ENCODE measurements at regions of chr4 and their contacts with region 1.

Region 1: DNA sequence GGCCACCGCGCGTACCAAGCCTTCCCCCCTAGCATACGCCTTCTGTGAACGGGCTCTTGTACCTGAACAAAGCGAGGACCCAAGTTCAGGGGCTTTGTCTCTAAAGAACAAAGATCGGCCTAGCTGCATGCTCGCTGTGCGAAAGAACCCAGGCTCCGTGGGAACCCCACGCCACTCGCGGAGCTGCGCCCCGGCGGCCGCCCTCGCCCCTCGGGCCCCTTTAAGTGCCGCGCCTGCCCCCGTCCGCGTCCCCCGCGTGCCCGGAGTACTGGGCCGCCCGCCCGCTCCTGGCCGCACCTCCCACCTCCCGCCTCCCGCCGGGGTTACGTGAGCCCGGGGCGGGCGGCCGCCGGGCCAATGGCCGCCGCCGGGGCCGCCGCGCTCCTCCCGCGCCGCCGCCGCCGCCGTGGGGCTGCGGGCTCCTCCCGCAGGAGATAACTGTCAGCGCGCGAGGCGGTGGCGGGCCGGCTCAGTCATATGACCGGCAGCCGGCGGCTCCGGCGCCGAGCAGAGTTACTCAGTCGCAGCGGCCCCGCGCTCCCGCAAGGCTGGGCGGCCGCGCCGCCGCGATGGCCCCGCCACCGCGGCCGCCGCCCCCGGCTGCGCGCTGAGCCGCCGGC is at the start of gene FNIP2:
- DNase-seq: peak; percentile 86 to 95 (median 92)
- ATAC-seq: peak; percentile 94
- H3K4me3 ChIP-seq: peak within 1 kb of the TSS; percentile 58
- H3K27ac ChIP-seq: peak within 1 kb of the TSS; percentile 73
- H3K4me1 ChIP-seq: peaks cover 9 to 13% of the 10 kb centered on the region in 2 experiments; a peak in 4 of 5 replicates
- H3K27me3 ChIP-seq: no peaks in the 10 kb centered on the region
- CTCF ChIP-seq: no peak
- EP300 ChIP-seq: no peak
- POLR2A ChIP-seq: peak; percentile 54; the same call in 1 of the 2 replicates
- RAD21 ChIP-seq: no peak
- polyA plus RNA-seq, gene FNIP2: 1.7 to 2.8 TPM

Region 2: DNA sequence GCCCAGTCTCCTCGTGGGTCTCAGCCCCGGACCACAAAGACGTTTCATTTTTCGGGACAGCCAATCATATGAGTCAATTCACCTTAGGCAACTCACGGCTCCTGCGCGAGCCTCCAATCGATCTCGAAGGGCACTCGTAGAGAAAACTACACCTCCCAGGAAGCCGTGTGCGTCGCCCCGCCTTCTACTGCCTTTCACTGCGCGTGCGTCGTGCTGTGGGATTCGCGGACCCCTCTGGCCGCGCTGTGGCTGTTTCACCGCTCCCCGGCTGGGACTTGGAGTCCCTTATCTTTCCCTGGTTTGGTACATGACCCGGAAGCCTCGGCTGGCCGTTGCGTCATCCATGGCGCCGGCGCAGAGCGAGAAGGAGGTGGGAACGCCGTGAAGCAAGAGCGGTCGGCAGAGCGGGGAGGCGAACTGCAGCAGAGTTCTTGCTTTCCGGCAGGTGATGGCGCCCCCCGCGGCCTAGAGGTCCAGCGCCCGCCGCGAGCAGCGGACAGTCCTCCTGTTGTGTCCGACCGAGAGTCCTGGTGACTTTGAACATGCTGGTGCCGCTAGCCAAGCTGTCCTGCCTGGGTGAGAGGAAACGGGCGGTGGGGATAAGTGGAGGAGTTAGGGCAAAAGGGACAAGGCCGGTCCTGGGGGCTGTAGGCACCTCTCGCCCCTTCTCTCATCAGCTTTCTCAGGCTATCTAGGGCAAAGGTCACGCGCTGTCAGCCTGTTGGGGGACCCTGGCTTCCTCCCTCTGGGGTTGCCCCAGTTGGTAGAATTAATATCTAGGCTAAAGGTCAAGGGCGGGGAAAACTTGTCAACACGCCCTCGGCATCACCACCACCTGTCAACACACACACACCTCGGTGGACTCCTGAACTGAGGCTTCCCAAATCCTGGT is 96.5 kb before region 1 on chr4 and contains the start of gene ETFDH:
- CTCF ChIA-PET with region 1: no interaction called
- POLR2A ChIA-PET with region 1: no interaction called
- in situ Hi-C with region 1: no loop called
- intact Hi-C with region 1: loop called (anchors 5 kb)
- DNase-seq: peak; percentile 94 to 99 (median 96)
- ATAC-seq: peak; percentile 87
- H3K4me3 ChIP-seq: peak within 1 kb of the TSS; percentile 92
- H3K27ac ChIP-seq: peak within 1 kb of the TSS; percentile 81
- H3K4me1 ChIP-seq: peaks cover 9 to 16% of the 10 kb centered on the region in 2 experiments; a peak in 4 of 5 replicates
- H3K27me3 ChIP-seq: no peaks in the 10 kb centered on the region
- CTCF ChIP-seq: peak; percentile 66 to 74 (median 67)
- EP300 ChIP-seq: no peak
- POLR2A ChIP-seq: peak; percentile 78
- RAD21 ChIP-seq: peak in 1 of 2 experiments; percentile 37; a peak in 1 of 4 replicates
- polyA plus RNA-seq, gene ETFDH: 14.6 to 25.1 TPM

Measured in K562 (cell line).